ENCODE measurements at regions of chr4 and their contacts with region 1.

Region 1: DNA sequence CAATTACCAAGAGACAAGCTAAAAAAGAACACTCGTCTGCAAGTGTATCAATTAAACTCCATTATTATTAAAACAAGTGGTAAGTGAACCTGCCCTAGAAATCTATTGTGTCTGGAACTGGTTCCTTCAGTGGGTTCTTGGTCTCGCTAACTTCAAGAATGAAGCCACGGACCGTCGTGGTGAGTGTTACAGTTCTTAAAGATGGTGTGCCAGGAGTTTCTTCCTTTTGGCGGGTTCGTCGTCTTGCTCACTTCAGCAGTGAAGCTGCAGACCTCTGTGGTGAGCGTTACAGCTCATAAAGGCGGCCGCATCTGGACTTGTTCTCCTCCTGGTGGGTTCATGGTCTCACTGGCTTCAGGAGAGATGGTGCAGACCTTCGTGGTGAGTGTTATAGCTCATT is 231.8 kb downstream of the GRID2 start:
- DNase-seq: no peak
- ATAC-seq: no peak
- H3K4me3 ChIP-seq: no peak overlapping the region
- H3K27ac ChIP-seq: no peak overlapping the region
- H3K4me1 ChIP-seq: no peaks in the 10 kb centered on the region
- H3K27me3 ChIP-seq: no peaks in the 10 kb centered on the region
- CTCF ChIP-seq: no peak
- POLR2A ChIP-seq: no peak
- RAD21 ChIP-seq: no peak

Region 2: GRCh38 chr4:92455951-92456350 is 79.6 kb before region 1 on chr4:
- CTCF ChIA-PET with region 1: no interaction called
- POLR2A ChIA-PET with region 1: interaction called, 14 read pairs
- dilution Hi-C with region 1: no loop called
- in situ Hi-C with region 1: no loop called
- intact Hi-C with region 1: no loop called
- DNase-seq: no peak
- ATAC-seq: no peak
- H3K4me3 ChIP-seq: no peak overlapping the region
- H3K27ac ChIP-seq: no peak overlapping the region
- H3K4me1 ChIP-seq: no peaks in the 10 kb centered on the region
- H3K27me3 ChIP-seq: no peaks in the 10 kb centered on the region
- CTCF ChIP-seq: no peak
- POLR2A ChIP-seq: no peak
- RAD21 ChIP-seq: no peak

Measured in IMR-90 (cell line).